Dendritic cell treated with granulocyte-macrophage colony-stimulating factor and Interleukin-4, amounts not matched to agents 40 ng/mL and 50 ng/mL, for 4 days (primary cell): ENCODE measurements at regions of chr16 and their contacts with region 1.

Region 1: GRCh38 chr16:75206749-75207451 is at the start of gene CTRB2:
- H3K4me3 Mint-ChIP-seq: no peak within 1 kb of the TSS
- H3K27ac Mint-ChIP-seq: no peak within 1 kb of the TSS
- H3K4me1 Mint-ChIP-seq: no peaks in the 10 kb centered on the region
- H3K27me3 Mint-ChIP-seq: peaks cover 83% of the 10 kb centered on the region

Region 2: GRCh38 chr16:75195811-75196790 is 10.8 kb before region 1 on chr16:
- intact Hi-C with region 1: no loop called
- H3K4me3 Mint-ChIP-seq: no peak overlapping the region
- H3K27ac Mint-ChIP-seq: no peak overlapping the region
- H3K4me1 Mint-ChIP-seq: peaks cover 3% of the 10 kb centered on the region
- H3K27me3 Mint-ChIP-seq: peaks cover 91% of the 10 kb centered on the region

Region 3: GRCh38 chr16:75219838-75220237 is 12.9 kb after region 1 on chr16:
- intact Hi-C with region 1: loop called (anchors 2 kb)
- H3K4me3 Mint-ChIP-seq: no peak overlapping the region
- H3K27ac Mint-ChIP-seq: no peak overlapping the region
- H3K4me1 Mint-ChIP-seq: peaks cover 8% of the 10 kb centered on the region
- H3K27me3 Mint-ChIP-seq: peaks cover 80% of the 10 kb centered on the region

Region 4: GRCh38 chr16:75227361-75228142 is 20.7 kb after region 1 on chr16:
- intact Hi-C with region 1: loop called (anchors 2 kb)
- H3K4me3 Mint-ChIP-seq: no peak overlapping the region
- H3K27ac Mint-ChIP-seq: no peak overlapping the region
- H3K4me1 Mint-ChIP-seq: peaks cover 1% of the 10 kb centered on the region
- H3K27me3 Mint-ChIP-seq: peaks cover 88% of the 10 kb centered on the region